HCT116 (cell line): ENCODE measurements at regions of chr5 and their contacts with region 1.

Region 1: GRCh38 chr5:139495638-139496435 is 13.3 kb upstream of the STING1 start:
- DNase-seq: no peak
- ATAC-seq: no peak
- H3K4me3 ChIP-seq: no peak overlapping the region
- H3K27ac ChIP-seq: no peak overlapping the region
- H3K4me1 ChIP-seq: peaks cover 9 to 30% of the 10 kb centered on the region in 2 experiments
- H3K27me3 ChIP-seq: no peaks in the 10 kb centered on the region
- CTCF ChIP-seq: no peak
- POLR2A ChIP-seq: no peak
- RAD21 ChIP-seq: no peak

Region 2: DNA sequence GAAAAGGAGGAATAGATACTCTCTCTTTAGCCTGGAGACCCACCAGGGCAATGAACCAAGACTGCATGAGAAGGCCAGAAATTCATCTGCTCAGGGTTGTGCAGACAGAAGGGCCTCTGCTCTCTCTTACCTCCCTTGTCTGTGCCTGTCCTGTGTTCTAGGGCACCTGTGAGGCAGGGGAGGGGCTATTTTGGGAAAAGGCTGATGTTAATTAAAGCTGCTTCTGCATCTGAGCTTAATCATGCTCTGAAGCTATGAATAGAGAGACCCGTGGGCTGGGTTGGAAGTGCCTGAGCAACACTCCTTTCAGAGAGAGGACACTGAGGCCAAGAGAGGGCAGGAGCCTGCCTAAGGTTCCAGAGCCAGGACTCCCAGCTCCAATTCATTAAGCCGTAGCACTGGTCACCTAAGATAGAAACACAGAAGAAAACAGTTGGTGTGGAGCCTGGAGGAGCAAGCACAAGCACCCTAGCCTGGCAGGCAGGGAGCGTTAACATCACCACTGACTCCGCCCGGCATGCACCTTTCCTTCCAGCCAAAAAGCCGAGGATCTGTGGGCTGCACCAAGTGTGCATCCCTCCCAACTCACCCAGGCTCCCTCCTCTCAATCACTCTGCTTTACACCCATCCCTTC is 18.1 kb after region 1 on chr5:
- CTCF ChIA-PET with region 1: interaction called, 13 read pairs
- POLR2A ChIA-PET with region 1: no interaction called
- RAD21 ChIA-PET with region 1: no interaction called
- intact Hi-C with region 1: no loop called
- DNase-seq: no peak
- ATAC-seq: peak; percentile 12
- H3K4me3 ChIP-seq: no peak overlapping the region
- H3K27ac ChIP-seq: no peak overlapping the region
- H3K4me1 ChIP-seq: peaks cover 5 to 13% of the 10 kb centered on the region in 2 experiments; a peak in 3 of 4 replicates
- H3K27me3 ChIP-seq: no peaks in the 10 kb centered on the region
- CTCF ChIP-seq: no peak; a peak in 1 of 6 replicates
- POLR2A ChIP-seq: no peak
- RAD21 ChIP-seq: no peak